ENCODE measurements at regions of chr3 and their contacts with region 1.

Region 1: GRCh38 chr3:76107935-76108570 is 322.7 kb upstream of the ZNF717 start:
- DNase-seq: peak; percentile 27
- H3K4me3 ChIP-seq: no peak overlapping the region
- H3K27ac ChIP-seq: no peak overlapping the region
- H3K4me1 ChIP-seq: no peaks in the 10 kb centered on the region
- H3K27me3 ChIP-seq: no peaks in the 10 kb centered on the region
- CTCF ChIP-seq: peak; percentile 86 to 90

Region 2: GRCh38 chr3:75814797-75815196 is 293.3 kb before region 1 on chr3:
- CTCF ChIA-PET with region 1: no interaction called
- dilution Hi-C with region 1: no loop called
- in situ Hi-C with region 1: no loop called
- intact Hi-C with region 1: loop called (anchors 1 kb)
- DNase-seq: no peak
- H3K4me3 ChIP-seq: no peak overlapping the region
- H3K27ac ChIP-seq: no peak overlapping the region
- H3K4me1 ChIP-seq: no peaks in the 10 kb centered on the region
- H3K27me3 ChIP-seq: no peaks in the 10 kb centered on the region
- CTCF ChIP-seq: no peak

Region 3: DNA sequence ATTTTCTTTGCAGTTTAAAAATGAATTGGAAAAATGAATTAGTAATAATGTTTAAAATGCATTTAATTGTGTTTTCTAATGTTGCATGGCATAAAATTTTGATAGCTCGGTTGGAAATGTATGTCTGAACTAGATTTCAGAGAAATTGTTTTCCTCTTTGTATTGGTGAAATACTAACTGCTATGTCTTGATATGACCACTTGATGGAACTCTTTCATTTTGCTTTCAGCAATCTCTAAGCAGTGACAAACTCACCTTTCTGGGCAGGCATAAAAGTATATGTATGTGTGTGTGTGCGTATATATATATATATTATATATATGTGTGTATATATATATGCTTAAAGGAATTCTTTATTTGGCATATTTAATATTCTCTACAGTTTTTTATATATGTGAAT is 83.4 kb before region 1 on chr3:
- CTCF ChIA-PET with region 1: no interaction called
- dilution Hi-C with region 1: no loop called
- in situ Hi-C with region 1: no loop called
- intact Hi-C with region 1: loop called (anchors 1 kb)
- DNase-seq: peak; percentile 29
- H3K4me3 ChIP-seq: no peak overlapping the region
- H3K27ac ChIP-seq: no peak overlapping the region
- H3K4me1 ChIP-seq: no peaks in the 10 kb centered on the region
- H3K27me3 ChIP-seq: no peaks in the 10 kb centered on the region
- CTCF ChIP-seq: peak; percentile 33 to 64

Region 4: GRCh38 chr3:76044601-76045600 is 63.2 kb before region 1 on chr3:
- CTCF ChIA-PET with region 1: no interaction called
- dilution Hi-C with region 1: no loop called
- in situ Hi-C with region 1: no loop called
- intact Hi-C with region 1: loop called (anchors 1 kb)
- DNase-seq: no peak
- H3K4me3 ChIP-seq: no peak overlapping the region
- H3K27ac ChIP-seq: no peak overlapping the region
- H3K4me1 ChIP-seq: no peaks in the 10 kb centered on the region
- H3K27me3 ChIP-seq: no peaks in the 10 kb centered on the region
- CTCF ChIP-seq: peak; percentile 57 to 67

Region 5: GRCh38 chr3:76063019-76063418 is 45.0 kb before region 1 on chr3:
- CTCF ChIA-PET with region 1: no interaction called
- dilution Hi-C with region 1: no loop called
- in situ Hi-C with region 1: no loop called
- intact Hi-C with region 1: no loop called
- DNase-seq: peak; percentile 93
- H3K4me3 ChIP-seq: no peak overlapping the region
- H3K27ac ChIP-seq: peak overlapping the region; percentile 34
- H3K4me1 ChIP-seq: peaks cover 12% of the 10 kb centered on the region
- H3K27me3 ChIP-seq: no peaks in the 10 kb centered on the region
- CTCF ChIP-seq: no peak